ENCODE measurements at regions of chr7 and their contacts with region 1.

Region 1: GRCh38 chr7:55255496-55256435 is 109.4 kb upstream of the LANCL2 start:
- DNase-seq: peak; percentile 61
- ATAC-seq: peak; percentile 91
- H3K4me3 ChIP-seq: peak overlapping the region; percentile 47 to 76 (median 48)
- H3K27ac ChIP-seq: no peak overlapping the region
- H3K4me1 ChIP-seq: peaks cover 17% of the 10 kb centered on the region
- H3K27me3 ChIP-seq: peaks cover 0 to 23% of the 10 kb centered on the region in 2 experiments; a peak in 3 of 5 replicates
- CTCF ChIP-seq: peak; percentile 97
- EP300 ChIP-seq: no peak
- POLR2A ChIP-seq: no peak
- RAD21 ChIP-seq: peak; percentile 96

Region 2: GRCh38 chr7:54758702-54759592 is 496.8 kb before region 1 on chr7 and contains the start of gene SEC61G:
- CTCF ChIA-PET with region 1: no interaction called
- POLR2A ChIA-PET with region 1: interaction called, 11 read pairs
- in situ Hi-C with region 1: no loop called
- intact Hi-C with region 1: no loop called
- DNase-seq: peak; percentile 93
- ATAC-seq: peak; percentile 97
- H3K4me3 ChIP-seq: peak within 1 kb of the TSS; percentile 93 to 98 (median 98)
- H3K27ac ChIP-seq: peak within 1 kb of the TSS; percentile 74
- H3K4me1 ChIP-seq: peaks cover 47% of the 10 kb centered on the region
- H3K27me3 ChIP-seq: no peaks in the 10 kb centered on the region; a peak in 2 of 5 replicates
- CTCF ChIP-seq: no peak
- EP300 ChIP-seq: peak in 1 of 2 experiments; percentile 10; a peak in 1 of 4 replicates
- POLR2A ChIP-seq: peak; percentile 90 to 91
- RAD21 ChIP-seq: peak; percentile 11; the same call in 1 of the 2 replicates
- total RNA-seq, gene SEC61G: 328 and 434 TPM in 2 replicates

Region 3: GRCh38 chr7:54778696-54779540 is 476.8 kb before region 1 on chr7:
- CTCF ChIA-PET with region 1: interaction called, 98 read pairs
- POLR2A ChIA-PET with region 1: no interaction called
- in situ Hi-C with region 1: loop called (anchors 5 kb)
- intact Hi-C with region 1: loop called (anchors 1 kb)
- DNase-seq: no peak
- ATAC-seq: no peak
- H3K4me3 ChIP-seq: no peak overlapping the region
- H3K27ac ChIP-seq: no peak overlapping the region
- H3K4me1 ChIP-seq: peaks cover 2% of the 10 kb centered on the region; the same call in 1 of the 2 replicates
- H3K27me3 ChIP-seq: peaks cover 4 to 18% of the 10 kb centered on the region in 2 experiments; a peak in 2 of 5 replicates
- CTCF ChIP-seq: no peak
- EP300 ChIP-seq: no peak
- POLR2A ChIP-seq: no peak
- RAD21 ChIP-seq: no peak

Region 4: DNA sequence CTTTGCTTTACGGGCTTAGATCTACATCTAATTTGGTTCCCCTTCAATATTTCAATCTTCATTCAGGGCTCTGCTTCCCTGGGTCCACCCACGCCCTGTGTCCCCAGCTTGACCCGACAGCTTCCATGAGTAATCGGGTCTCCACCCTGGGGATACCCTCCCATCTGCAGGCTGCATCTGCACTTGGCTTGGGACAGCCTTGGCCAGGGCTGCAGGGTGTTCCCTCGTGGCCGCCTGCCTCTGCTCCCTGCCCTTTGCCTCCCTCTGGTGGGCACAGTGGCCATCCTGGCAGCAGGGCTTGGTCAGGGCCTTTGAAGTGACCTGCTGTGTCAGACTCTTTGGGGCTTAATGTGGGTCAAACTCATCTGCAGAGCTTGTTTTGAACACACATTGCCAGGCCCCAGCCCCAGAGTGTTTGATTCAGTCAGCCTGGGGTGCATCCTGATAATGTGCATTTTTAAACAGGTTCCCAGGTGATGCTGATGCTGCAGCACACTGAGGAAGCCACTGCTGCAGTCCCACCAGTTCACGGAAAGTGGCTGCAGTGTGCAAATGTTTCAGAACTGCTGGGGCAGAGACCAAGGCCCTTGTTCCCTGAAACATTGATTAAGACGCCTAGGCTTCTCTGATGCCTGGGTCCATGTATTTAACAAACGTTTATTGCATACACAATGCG is 416.1 kb before region 1 on chr7:
- CTCF ChIA-PET with region 1: interaction called, 11 read pairs
- POLR2A ChIA-PET with region 1: no interaction called
- in situ Hi-C with region 1: no loop called
- intact Hi-C with region 1: loop called (anchors 1 kb)
- DNase-seq: peak; percentile 20
- ATAC-seq: peak; percentile 96
- H3K4me3 ChIP-seq: no peak overlapping the region
- H3K27ac ChIP-seq: no peak overlapping the region
- H3K4me1 ChIP-seq: peaks cover 19% of the 10 kb centered on the region
- H3K27me3 ChIP-seq: 0 out of 5 replicates have a peak, but pooled peaks cover 0 to 3% of the 10 kb centered on the region in 2 experiments
- CTCF ChIP-seq: peak; percentile 87
- EP300 ChIP-seq: no peak
- POLR2A ChIP-seq: no peak
- RAD21 ChIP-seq: peak; percentile 60

Region 5: DNA sequence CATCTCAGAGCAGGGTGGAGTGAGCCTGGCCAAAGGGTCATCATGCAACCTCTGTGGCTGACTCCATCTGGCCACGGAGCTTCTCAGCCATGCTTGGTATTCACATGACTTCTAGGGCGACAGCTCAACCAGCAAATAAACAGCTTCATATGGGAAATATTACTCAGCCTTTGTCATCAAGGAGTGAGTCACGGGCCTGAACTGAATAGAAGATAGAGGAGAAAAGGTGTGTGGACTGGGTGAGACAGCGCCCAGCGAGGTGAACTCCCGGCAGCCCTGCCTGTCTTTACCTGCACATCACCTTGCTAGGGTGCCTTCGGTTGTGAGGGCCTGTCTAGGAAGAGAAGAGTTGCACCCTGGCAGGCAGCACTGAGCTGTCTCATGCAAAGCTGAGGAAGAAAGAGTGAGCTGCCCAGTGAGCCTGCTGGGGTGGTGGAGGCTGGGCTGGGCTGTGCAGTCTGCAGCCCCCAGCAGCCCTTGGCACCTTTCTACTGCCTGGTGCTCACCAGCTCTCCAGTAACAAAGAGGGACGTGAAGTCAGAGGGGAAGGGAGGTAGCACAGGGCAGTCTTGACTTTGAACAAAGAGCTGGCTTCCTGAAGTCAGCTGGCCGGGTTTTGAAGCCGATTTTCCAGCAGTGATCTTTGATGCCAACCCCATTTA is 122.7 kb before region 1 on chr7:
- CTCF ChIA-PET with region 1: no interaction called
- POLR2A ChIA-PET with region 1: interaction called, 3 read pairs
- in situ Hi-C with region 1: no loop called
- intact Hi-C with region 1: loop called (anchors 1 kb)
- DNase-seq: peak; percentile 75
- ATAC-seq: peak; percentile 54
- H3K4me3 ChIP-seq: peak overlapping the region in 2 of 3 experiments; percentile 2 to 63; a peak in 3 of 6 replicates
- H3K27ac ChIP-seq: peak overlapping the region; percentile 52
- H3K4me1 ChIP-seq: peaks cover 59% of the 10 kb centered on the region
- H3K27me3 ChIP-seq: no peaks in the 10 kb centered on the region
- CTCF ChIP-seq: no peak
- EP300 ChIP-seq: peak in 1 of 2 experiments; percentile 48; a peak in 1 of 4 replicates
- POLR2A ChIP-seq: no peak; a peak in 1 of 4 replicates
- RAD21 ChIP-seq: no peak

Region 6: GRCh38 chr7:55177589-55178261 is 78.0 kb before region 1 on chr7:
- CTCF ChIA-PET with region 1: no interaction called
- POLR2A ChIA-PET with region 1: interaction called, 17 read pairs
- in situ Hi-C with region 1: no loop called
- intact Hi-C with region 1: loop called (anchors 2 kb)
- DNase-seq: peak; percentile 94
- ATAC-seq: peak; percentile 74
- H3K4me3 ChIP-seq: peak overlapping the region; percentile 42 to 79 (median 49); a peak in 5 of 6 replicates
- H3K27ac ChIP-seq: peak overlapping the region; percentile 99
- H3K4me1 ChIP-seq: peaks cover 69% of the 10 kb centered on the region
- H3K27me3 ChIP-seq: no peaks in the 10 kb centered on the region; a peak in 1 of 5 replicates
- CTCF ChIP-seq: peak; percentile 30
- EP300 ChIP-seq: peak in 1 of 2 experiments; percentile 71; a peak in 2 of 4 replicates
- POLR2A ChIP-seq: peak in 1 of 2 experiments; percentile 64; a peak in 2 of 4 replicates
- RAD21 ChIP-seq: no peak

Region 7: GRCh38 chr7:55325371-55325792 is 69.6 kb after region 1 on chr7:
- CTCF ChIA-PET with region 1: no interaction called
- POLR2A ChIA-PET with region 1: no interaction called
- in situ Hi-C with region 1: no loop called
- intact Hi-C with region 1: no loop called
- DNase-seq: no peak
- ATAC-seq: no peak
- H3K4me3 ChIP-seq: no peak overlapping the region
- H3K27ac ChIP-seq: no peak overlapping the region
- H3K4me1 ChIP-seq: no peaks in the 10 kb centered on the region
- H3K27me3 ChIP-seq: peaks cover 1 to 16% of the 10 kb centered on the region in 2 experiments; a peak in 2 of 5 replicates
- CTCF ChIP-seq: no peak
- EP300 ChIP-seq: no peak
- POLR2A ChIP-seq: no peak
- RAD21 ChIP-seq: no peak

Measured in HepG2 (cell line).